ENCODE measurements at regions of chr16 and their contacts with region 1.

Region 1: GRCh38 chr16:89761304-89761922 is 40.1 kb downstream of the ZNF276 start:
- DNase-seq: peak in 3 of 10 donors; percentile 42 to 54 (median 50)
- ATAC-seq: peak; percentile 59 to 77
- H3K4me3 Mint-ChIP-seq: peak overlapping the region; percentile 79 to 93 (median 87)
- H3K27ac Mint-ChIP-seq: peak overlapping the region; percentile 84 to 95 (median 90)
- H3K4me1 Mint-ChIP-seq: peaks cover 10 to 54% (median 38%) of the 10 kb centered on the region in 4 donors
- H3K27me3 Mint-ChIP-seq: no peaks in the 10 kb centered on the region

Region 2: GRCh38 chr16:89476804-89477261 is 284.6 kb before region 1 on chr16:
- POLR2A ChIA-PET with region 1: no interaction called
- DNase-seq: no peak
- ATAC-seq: peak; percentile 51 to 55
- H3K4me3 Mint-ChIP-seq: peak overlapping the region; percentile 59 to 92 (median 82)
- H3K27ac Mint-ChIP-seq: peak overlapping the region; percentile 46 to 92 (median 85)
- H3K4me1 Mint-ChIP-seq: peaks cover 60 to 97% (median 92%) of the 10 kb centered on the region in 4 donors
- H3K27me3 Mint-ChIP-seq: no peaks in the 10 kb centered on the region

Region 3: DNA sequence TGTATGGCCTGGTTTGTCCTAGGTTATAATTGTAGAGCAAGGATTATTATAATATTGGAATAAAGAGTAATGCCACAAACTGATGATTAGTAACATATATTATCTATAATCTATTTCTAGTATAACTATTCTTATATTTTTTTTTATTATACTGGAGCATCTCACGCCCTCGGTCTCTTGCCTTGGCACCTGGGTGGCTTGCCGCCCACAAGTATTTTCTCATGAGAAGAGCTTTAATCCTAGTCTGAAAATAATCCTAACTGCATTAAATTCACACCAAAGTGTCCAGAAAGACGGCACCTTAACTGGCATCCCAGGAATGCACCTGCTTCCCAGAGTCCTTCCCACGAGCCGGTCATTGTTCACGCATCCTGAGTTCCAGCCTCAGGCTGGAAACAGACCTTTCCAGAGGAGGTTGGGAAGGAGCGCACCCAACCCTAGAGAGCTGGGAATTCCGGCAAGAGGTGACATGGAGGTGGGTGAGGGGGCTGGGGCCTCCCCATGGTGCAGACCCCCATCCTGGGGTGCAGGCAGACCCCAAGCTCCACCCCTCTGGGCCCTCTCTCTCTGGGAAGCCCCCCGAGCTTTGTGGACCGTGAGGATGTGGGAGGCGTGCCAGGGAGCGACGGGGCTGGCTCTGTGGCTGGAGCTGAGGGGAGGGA is 119.8 kb before region 1 on chr16:
- POLR2A ChIA-PET with region 1: no interaction called
- DNase-seq: no peak
- ATAC-seq: no peak
- H3K4me3 Mint-ChIP-seq: peak overlapping the region in 6 of 10 donors; percentile 76 to 85 (median 78)
- H3K27ac Mint-ChIP-seq: peak overlapping the region in 3 of 10 donors; percentile 15 to 69 (median 54)
- H3K4me1 Mint-ChIP-seq: peaks cover 6 to 10% (median 9%) of the 10 kb centered on the region in 4 donors
- H3K27me3 Mint-ChIP-seq: peaks cover 0 to 6% (median 0%) of the 10 kb centered on the region in 5 donors

Region 4: GRCh38 chr16:89737341-89738071 is 23.9 kb before region 1 on chr16:
- POLR2A ChIA-PET with region 1: interaction called, 10 read pairs
- DNase-seq: peak in 8 of 10 donors; percentile 37 to 79 (median 58)
- ATAC-seq: peak; percentile 72 to 88
- H3K4me3 Mint-ChIP-seq: peak overlapping the region; percentile 26 to 83 (median 54)
- H3K27ac Mint-ChIP-seq: peak overlapping the region; percentile 60 to 92 (median 82)
- H3K4me1 Mint-ChIP-seq: peaks cover 17 to 75% (median 33%) of the 10 kb centered on the region in 4 donors
- H3K27me3 Mint-ChIP-seq: no peaks in the 10 kb centered on the region

Region 5: DNA sequence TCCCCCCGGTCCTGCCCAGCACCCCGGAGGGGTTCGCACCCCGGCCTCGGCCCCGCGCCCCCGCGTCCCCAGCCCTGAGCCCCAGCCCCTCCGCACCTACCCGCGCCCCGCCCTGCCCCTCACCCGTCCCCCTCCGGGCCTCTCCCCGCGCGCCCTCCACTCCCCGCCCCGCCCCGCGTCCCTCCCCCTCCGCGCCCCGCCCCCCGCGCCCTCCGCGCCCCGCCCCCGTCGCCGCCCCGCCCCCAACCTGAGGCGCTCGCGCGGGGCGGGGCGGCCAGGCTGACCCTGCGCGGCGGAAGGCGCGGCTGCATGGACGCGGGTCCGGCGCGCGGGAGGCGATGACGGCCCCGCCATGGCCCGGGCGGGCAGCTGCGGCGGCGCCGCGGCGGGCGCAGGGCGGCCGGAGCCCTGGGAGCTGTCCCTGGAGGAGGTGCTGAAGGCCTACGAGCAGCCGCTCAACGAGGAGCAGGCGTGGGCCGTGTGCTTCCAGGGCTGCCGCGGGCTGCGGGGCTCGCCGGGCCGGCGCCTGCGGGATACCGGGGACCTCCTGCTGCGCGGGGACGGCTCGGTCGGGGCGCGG is 66.9 kb after region 1 on chr16 and contains the start of gene SPIRE2:
- POLR2A ChIA-PET with region 1: no interaction called
- DNase-seq: peak; percentile 60 to 85 (median 72)
- ATAC-seq: peak; percentile 97
- H3K4me3 Mint-ChIP-seq: peak within 1 kb of the TSS; percentile 33 to 75 (median 61)
- H3K27ac Mint-ChIP-seq: peak within 1 kb of the TSS in 1 of 10 donors; percentile 49
- H3K4me1 Mint-ChIP-seq: peaks cover 0 to 11% (median 6%) of the 10 kb centered on the region in 4 donors
- H3K27me3 Mint-ChIP-seq: peaks cover 9 to 36% (median 16%) of the 10 kb centered on the region in 5 donors
- polyA plus RNA-seq, gene SPIRE2: 0.16 TPM in 1 of 3 donors, not detected in the others

Region 6: DNA sequence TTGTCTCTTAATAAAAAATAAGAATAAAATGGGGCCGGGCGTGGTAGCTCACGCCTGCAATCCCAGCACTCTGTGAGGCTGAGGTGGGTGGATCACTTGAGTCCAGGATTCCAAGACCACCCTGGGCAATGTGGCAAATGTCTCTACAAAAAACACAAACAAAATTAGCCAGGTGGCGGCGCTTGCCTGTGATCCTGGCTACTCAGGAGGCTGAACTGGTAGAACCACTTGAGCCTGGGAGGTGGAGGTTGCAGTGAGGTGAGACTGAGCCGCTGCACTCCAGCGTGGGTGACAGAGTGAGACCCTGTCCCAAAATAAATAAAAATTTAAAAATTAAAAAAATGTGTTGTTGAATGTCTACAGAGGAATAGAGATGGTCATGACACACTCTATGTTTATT is 184.3 kb after region 1 on chr16:
- POLR2A ChIA-PET with region 1: no interaction called
- DNase-seq: no peak
- ATAC-seq: no peak
- H3K4me3 Mint-ChIP-seq: no peak overlapping the region
- H3K27ac Mint-ChIP-seq: no peak overlapping the region
- H3K4me1 Mint-ChIP-seq: peaks cover 2 to 26% (median 18%) of the 10 kb centered on the region in 4 donors
- H3K27me3 Mint-ChIP-seq: peaks cover 5 to 29% (median 12%) of the 10 kb centered on the region in 5 donors